ENCODE measurements at regions of chr11 and their contacts with region 1.

Region 1: DNA sequence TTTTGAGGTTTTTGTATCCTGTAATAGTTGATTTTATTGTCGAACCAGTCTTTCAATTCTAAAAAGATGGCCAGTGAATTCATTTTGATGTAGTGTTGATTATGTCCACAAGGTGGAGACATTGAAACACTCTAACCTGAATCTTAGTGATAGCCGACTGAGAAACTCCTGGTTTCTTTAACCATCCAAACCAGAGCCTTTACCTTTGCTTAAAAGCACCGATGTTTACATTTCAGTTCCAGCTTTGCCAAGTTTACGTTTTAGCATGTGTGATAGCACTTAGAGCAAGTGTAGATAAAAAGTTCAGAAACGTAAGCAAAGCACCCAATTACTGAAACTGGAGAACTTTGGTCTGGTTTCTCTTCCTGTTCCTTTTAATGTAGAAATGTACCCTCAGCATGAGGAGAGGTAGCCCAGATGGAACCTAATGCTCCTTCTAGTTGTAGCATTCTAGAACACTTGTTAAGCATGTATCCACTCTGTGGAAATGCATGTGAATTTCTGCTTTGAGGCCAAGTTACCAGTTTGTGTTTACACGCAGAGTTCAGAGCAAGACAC is 208.6 kb downstream of the DBX1 start:
- DNase-seq: peak; percentile 70
- ATAC-seq: peak; percentile 23
- H3K4me3 ChIP-seq: peak overlapping the region; percentile 20 to 47 (median 36); a peak in 2 of 6 replicates
- H3K27ac ChIP-seq: peak overlapping the region; percentile 47
- H3K4me1 ChIP-seq: peaks cover 60% of the 10 kb centered on the region
- H3K27me3 ChIP-seq: no peaks in the 10 kb centered on the region
- CTCF ChIP-seq: peak; percentile 82
- EP300 ChIP-seq: no peak
- POLR2A ChIP-seq: no peak
- RAD21 ChIP-seq: peak; percentile 68

Region 2: DNA sequence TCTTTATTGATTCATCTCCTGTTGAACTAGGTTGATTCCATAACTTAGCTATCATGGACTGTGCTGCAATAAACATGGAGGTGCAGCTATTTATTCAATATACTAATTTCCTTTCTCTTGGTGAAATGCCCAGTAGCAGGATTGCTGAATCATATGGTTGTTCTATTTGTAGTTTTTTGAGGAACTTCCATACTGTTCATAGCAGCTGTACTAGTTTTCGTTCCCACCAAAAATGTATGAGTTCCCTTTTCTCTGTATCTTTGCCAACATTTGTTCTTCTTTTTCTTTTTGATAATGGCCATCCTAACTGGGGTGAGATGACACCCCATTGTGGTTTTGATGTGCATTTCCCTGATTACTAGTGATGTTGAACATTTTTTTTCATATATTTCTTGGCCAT is 326.2 kb before region 1 on chr11:
- CTCF ChIA-PET with region 1: no interaction called
- POLR2A ChIA-PET with region 1: no interaction called
- in situ Hi-C with region 1: no loop called
- intact Hi-C with region 1: no loop called
- DNase-seq: no peak
- ATAC-seq: no peak
- H3K4me3 ChIP-seq: no peak overlapping the region
- H3K27ac ChIP-seq: no peak overlapping the region
- H3K4me1 ChIP-seq: no peaks in the 10 kb centered on the region
- H3K27me3 ChIP-seq: peaks cover 0 to 2% of the 10 kb centered on the region in 2 experiments; a peak in 1 of 5 replicates
- CTCF ChIP-seq: no peak
- EP300 ChIP-seq: no peak
- POLR2A ChIP-seq: no peak
- RAD21 ChIP-seq: no peak

Region 3: GRCh38 chr11:19912958-19913892 is 38.4 kb before region 1 on chr11:
- CTCF ChIA-PET with region 1: no interaction called
- POLR2A ChIA-PET with region 1: interaction called, 9 read pairs
- in situ Hi-C with region 1: no loop called
- intact Hi-C with region 1: loop called (anchors 2 kb)
- DNase-seq: peak; percentile 36
- ATAC-seq: peak; percentile 59
- H3K4me3 ChIP-seq: peak overlapping the region; percentile 29 to 47 (median 47); a peak in 5 of 6 replicates
- H3K27ac ChIP-seq: peak overlapping the region; percentile 93
- H3K4me1 ChIP-seq: peaks cover 81% of the 10 kb centered on the region
- H3K27me3 ChIP-seq: no peaks in the 10 kb centered on the region
- CTCF ChIP-seq: no peak
- EP300 ChIP-seq: no peak
- POLR2A ChIP-seq: no peak
- RAD21 ChIP-seq: no peak

Region 4: DNA sequence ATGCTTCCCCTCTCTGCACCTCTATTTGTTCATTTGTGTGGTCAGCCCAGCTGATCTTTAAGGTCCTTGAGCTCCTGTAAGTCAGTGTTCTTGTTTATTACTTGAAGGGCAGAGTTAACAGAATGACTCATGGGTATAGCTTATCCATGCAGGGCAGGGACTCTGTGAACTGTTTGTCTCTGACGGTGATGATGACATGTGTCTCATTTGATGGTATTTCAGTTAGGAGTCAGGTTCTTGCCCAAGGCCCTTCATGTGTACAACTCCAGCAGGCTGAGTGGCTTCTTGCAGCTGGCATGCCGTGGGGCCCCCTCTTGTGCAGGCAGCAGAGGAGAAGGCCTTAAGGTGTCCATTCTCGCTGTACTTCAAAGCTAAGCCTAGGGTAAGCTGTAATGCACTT is 43.5 kb after region 1 on chr11:
- CTCF ChIA-PET with region 1: no interaction called
- POLR2A ChIA-PET with region 1: interaction called, 35 read pairs
- in situ Hi-C with region 1: no loop called
- intact Hi-C with region 1: no loop called
- DNase-seq: peak; percentile 88
- ATAC-seq: peak; percentile 86
- H3K4me3 ChIP-seq: no peak overlapping the region
- H3K27ac ChIP-seq: peak overlapping the region; percentile 13
- H3K4me1 ChIP-seq: peaks cover 48% of the 10 kb centered on the region
- H3K27me3 ChIP-seq: no peaks in the 10 kb centered on the region
- CTCF ChIP-seq: no peak
- EP300 ChIP-seq: peak; percentile 34 to 39; a peak in 2 of 4 replicates
- POLR2A ChIP-seq: no peak
- RAD21 ChIP-seq: no peak

Region 5: GRCh38 chr11:20022363-20023081 is 70.9 kb after region 1 on chr11:
- CTCF ChIA-PET with region 1: no interaction called
- POLR2A ChIA-PET with region 1: interaction called, 25 read pairs
- in situ Hi-C with region 1: loop called (anchors 5 kb)
- intact Hi-C with region 1: loop called (anchors 1 kb)
- DNase-seq: peak; percentile 79
- ATAC-seq: peak; percentile 75
- H3K4me3 ChIP-seq: peak overlapping the region; percentile 58 to 86 (median 80)
- H3K27ac ChIP-seq: peak overlapping the region; percentile 76
- H3K4me1 ChIP-seq: peaks cover 91% of the 10 kb centered on the region
- H3K27me3 ChIP-seq: no peaks in the 10 kb centered on the region; a peak in 1 of 5 replicates
- CTCF ChIP-seq: no peak
- EP300 ChIP-seq: no peak
- POLR2A ChIP-seq: 0 out of 4 replicates have a peak, but pooled peaks of 1 of the 2 experiments have one; percentile 29
- RAD21 ChIP-seq: no peak

Region 6: DNA sequence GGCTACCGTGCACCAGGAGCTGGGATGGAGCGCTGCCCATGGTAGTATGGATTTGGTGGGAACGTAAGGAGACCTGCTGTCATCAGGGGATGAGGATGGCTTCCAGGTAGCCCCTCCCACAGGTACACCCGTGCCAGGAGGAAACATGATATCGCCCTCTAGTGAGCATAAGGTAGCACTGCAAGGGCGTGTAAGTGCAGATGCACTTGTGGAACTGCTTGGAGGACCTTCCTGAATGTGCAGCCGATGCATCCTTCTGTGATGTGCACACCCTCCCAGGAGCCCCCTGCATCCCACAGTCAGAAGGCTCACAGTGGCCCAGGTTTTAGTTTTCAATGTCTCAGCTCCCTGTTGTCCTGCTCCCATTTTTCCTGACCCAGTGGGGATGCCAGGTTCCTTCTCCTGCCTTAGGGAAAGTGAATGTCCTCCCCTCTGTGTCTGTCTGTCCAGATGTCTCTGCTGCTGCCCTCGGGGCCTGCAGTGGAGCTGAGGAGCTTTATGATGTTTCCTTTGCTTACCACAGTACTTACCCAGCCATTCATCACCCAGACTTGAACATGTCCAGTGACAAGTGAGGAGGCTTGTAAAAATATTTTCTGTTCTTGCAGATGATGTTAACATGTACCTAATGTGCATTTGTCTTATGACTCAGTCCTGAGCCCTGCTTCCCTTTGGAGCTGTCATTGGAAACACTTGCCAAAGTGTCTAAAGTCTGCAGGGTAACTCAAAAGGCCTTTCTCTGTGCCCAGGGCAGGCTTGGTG is 159.5 kb after region 1 on chr11:
- CTCF ChIA-PET with region 1: interaction called, 30 read pairs
- POLR2A ChIA-PET with region 1: no interaction called
- in situ Hi-C with region 1: no loop called
- intact Hi-C with region 1: loop called (anchors 1 kb)
- DNase-seq: peak; percentile 70
- ATAC-seq: peak; percentile 85
- H3K4me3 ChIP-seq: no peak overlapping the region
- H3K27ac ChIP-seq: no peak overlapping the region
- H3K4me1 ChIP-seq: no peaks in the 10 kb centered on the region
- H3K27me3 ChIP-seq: no peaks in the 10 kb centered on the region
- CTCF ChIP-seq: peak; percentile 95
- EP300 ChIP-seq: no peak
- POLR2A ChIP-seq: no peak; a peak in 1 of 4 replicates
- RAD21 ChIP-seq: peak; percentile 45; the same call in 1 of the 2 replicates